PC-3 (cell line): ENCODE measurements at regions of chr13 and their contacts with region 1.

Region 1: GRCh38 chr13:35961461-35962220 is 169.5 kb downstream of the DCLK1 start:
- DNase-seq: peak; percentile 13
- ATAC-seq: no peak
- H3K4me3 ChIP-seq: no peak overlapping the region
- H3K27ac ChIP-seq: no peak overlapping the region
- H3K4me1 ChIP-seq: peaks cover 11% of the 10 kb centered on the region; the same call in 1 of the 2 replicates
- H3K27me3 ChIP-seq: no peaks in the 10 kb centered on the region
- CTCF ChIP-seq: peak; percentile 54

Region 2: GRCh38 chr13:35164324-35164932 is 797.2 kb before region 1 on chr13:
- CTCF ChIA-PET with region 1: no interaction called
- POLR2A ChIA-PET with region 1: no interaction called
- intact Hi-C with region 1: loop called (anchors 10 kb)
- DNase-seq: peak; percentile 63
- ATAC-seq: peak; percentile 42; the same call in 1 of the 2 replicates
- H3K4me3 ChIP-seq: no peak overlapping the region
- H3K27ac ChIP-seq: no peak overlapping the region
- H3K4me1 ChIP-seq: no peaks in the 10 kb centered on the region
- H3K27me3 ChIP-seq: no peaks in the 10 kb centered on the region
- CTCF ChIP-seq: peak; percentile 77

Region 3: GRCh38 chr13:35225582-35225981 is 736.1 kb before region 1 on chr13:
- CTCF ChIA-PET with region 1: no interaction called
- POLR2A ChIA-PET with region 1: no interaction called
- intact Hi-C with region 1: loop called (anchors 5 kb)
- DNase-seq: no peak
- ATAC-seq: no peak
- H3K4me3 ChIP-seq: no peak overlapping the region
- H3K27ac ChIP-seq: no peak overlapping the region
- H3K4me1 ChIP-seq: no peaks in the 10 kb centered on the region
- H3K27me3 ChIP-seq: no peaks in the 10 kb centered on the region
- CTCF ChIP-seq: no peak

Region 4: DNA sequence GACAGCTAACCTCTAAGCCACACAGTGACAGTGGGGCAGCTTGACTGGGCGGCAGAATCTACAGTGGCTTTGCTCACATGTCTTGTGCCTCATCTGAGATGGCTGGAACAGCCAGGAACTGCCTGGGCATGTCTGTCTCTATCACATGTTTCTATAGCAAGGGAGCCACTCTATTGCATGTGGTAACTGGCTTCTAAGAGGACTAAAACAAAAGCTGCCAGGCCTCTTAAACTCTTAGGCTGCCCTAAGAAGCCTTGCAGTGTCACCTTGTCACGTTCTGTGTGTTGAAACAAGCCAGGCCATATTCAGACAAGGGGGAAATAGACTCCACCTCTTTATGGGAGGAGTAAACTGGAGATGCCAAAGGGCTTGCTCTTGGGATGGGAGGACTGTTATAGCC is 362.3 kb before region 1 on chr13:
- CTCF ChIA-PET with region 1: no interaction called
- POLR2A ChIA-PET with region 1: no interaction called
- intact Hi-C with region 1: no loop called
- DNase-seq: no peak
- ATAC-seq: no peak
- H3K4me3 ChIP-seq: no peak overlapping the region
- H3K27ac ChIP-seq: no peak overlapping the region
- H3K4me1 ChIP-seq: no peaks in the 10 kb centered on the region
- H3K27me3 ChIP-seq: no peaks in the 10 kb centered on the region
- CTCF ChIP-seq: no peak

Region 5: GRCh38 chr13:35720690-35721554 is 240.7 kb before region 1 on chr13:
- CTCF ChIA-PET with region 1: no interaction called
- POLR2A ChIA-PET with region 1: no interaction called
- intact Hi-C with region 1: loop called (anchors 2 kb)
- DNase-seq: peak; percentile 70
- ATAC-seq: peak; percentile 60
- H3K4me3 ChIP-seq: peak overlapping the region; percentile 58
- H3K27ac ChIP-seq: no peak overlapping the region
- H3K4me1 ChIP-seq: peaks cover 17% of the 10 kb centered on the region
- H3K27me3 ChIP-seq: no peaks in the 10 kb centered on the region
- CTCF ChIP-seq: peak; percentile 95

Region 6: GRCh38 chr13:35789335-35790165 is 172.1 kb before region 1 on chr13:
- CTCF ChIA-PET with region 1: no interaction called
- POLR2A ChIA-PET with region 1: no interaction called
- intact Hi-C with region 1: loop called (anchors 2 kb)
- DNase-seq: peak; percentile 52
- ATAC-seq: peak; percentile 67
- H3K4me3 ChIP-seq: no peak overlapping the region
- H3K27ac ChIP-seq: no peak overlapping the region
- H3K4me1 ChIP-seq: 0 out of 2 replicates have a peak, but pooled peaks cover 14% of the 10 kb centered on the region
- H3K27me3 ChIP-seq: no peaks in the 10 kb centered on the region
- CTCF ChIP-seq: peak; percentile 60

Region 7: GRCh38 chr13:35818633-35819067 is 143.0 kb before region 1 on chr13:
- CTCF ChIA-PET with region 1: no interaction called
- POLR2A ChIA-PET with region 1: no interaction called
- intact Hi-C with region 1: loop called (anchors 2 kb)
- DNase-seq: peak; percentile 44
- ATAC-seq: peak; percentile 51; the same call in 1 of the 2 replicates
- H3K4me3 ChIP-seq: no peak overlapping the region
- H3K27ac ChIP-seq: no peak overlapping the region
- H3K4me1 ChIP-seq: no peaks in the 10 kb centered on the region
- H3K27me3 ChIP-seq: 0 out of 2 replicates have a peak, but pooled peaks cover 7% of the 10 kb centered on the region
- CTCF ChIP-seq: peak; percentile 62

Region 8: DNA sequence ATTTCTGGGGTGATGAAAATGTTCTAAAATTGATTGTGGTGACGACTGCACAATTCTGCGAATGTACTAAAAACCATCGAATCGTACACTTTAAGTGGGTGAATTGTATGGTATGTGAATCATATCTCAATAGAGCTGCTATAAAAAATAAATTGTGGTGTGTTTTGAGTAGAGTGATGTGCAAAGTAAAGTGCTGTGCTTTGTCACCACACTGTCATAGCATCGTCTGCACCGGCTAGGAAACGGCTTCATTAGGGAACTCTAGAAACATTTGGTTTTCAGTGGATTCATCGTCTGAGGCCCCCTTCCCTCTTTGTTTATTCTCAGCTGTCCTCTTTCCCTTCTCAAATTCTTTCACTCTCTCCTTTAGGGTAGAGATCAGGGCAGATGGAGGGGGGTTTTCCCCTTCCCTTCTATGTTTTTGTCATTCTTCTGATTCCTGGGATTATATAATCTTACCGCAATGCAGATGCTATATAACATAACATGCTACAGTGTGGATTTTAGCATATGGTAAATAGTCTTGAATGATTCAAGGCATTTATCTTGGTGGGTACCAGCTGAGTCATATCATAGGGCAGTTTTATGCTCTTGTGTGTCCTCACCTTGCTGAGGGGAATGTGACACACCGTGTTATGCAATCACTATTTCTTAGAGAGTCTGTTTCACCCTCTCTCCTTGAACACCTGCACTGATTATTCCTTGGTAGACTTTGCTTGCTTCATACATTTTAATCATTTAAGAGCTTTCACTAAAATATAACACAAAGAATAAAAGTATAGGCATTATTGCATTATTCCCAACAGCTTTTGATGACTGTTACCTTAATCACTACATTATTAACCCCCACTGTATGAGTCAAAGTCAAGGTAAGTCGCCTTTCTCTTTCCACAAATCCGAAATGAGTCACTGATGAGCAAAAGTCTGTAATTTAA is 69.9 kb before region 1 on chr13:
- CTCF ChIA-PET with region 1: no interaction called
- POLR2A ChIA-PET with region 1: no interaction called
- intact Hi-C with region 1: loop called (anchors 2 kb)
- DNase-seq: peak; percentile 87
- ATAC-seq: peak; percentile 82
- H3K4me3 ChIP-seq: peak overlapping the region; percentile 52
- H3K27ac ChIP-seq: peak overlapping the region; percentile 93
- H3K4me1 ChIP-seq: peaks cover 49% of the 10 kb centered on the region
- H3K27me3 ChIP-seq: no peaks in the 10 kb centered on the region
- CTCF ChIP-seq: no peak